RWPE1 (cell line): ENCODE measurements at regions of chr17 and their contacts with region 1.

Region 1: DNA sequence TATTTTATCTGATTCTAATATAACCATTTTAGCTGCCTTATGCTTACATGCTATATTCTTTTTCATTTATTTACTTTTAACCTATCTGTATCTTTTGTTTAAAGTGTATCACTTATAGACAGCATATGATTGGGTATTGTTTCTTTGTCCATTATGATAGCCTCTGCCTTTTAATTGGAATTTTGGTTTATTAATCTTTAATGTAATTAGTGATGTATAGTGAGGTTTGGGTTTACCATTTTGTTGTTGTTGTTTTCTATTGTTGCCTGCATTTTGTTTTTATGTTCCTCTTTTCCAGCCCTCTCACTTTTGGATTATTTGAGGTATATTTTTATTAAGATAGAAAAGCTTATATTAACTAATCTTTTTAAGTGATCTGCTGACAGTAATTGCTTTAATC is 59.4 kb downstream of the NLK start:
- DNase-seq: no peak
- H3K27ac ChIP-seq: no peak overlapping the region
- CTCF ChIP-seq: no peak

Region 2: DNA sequence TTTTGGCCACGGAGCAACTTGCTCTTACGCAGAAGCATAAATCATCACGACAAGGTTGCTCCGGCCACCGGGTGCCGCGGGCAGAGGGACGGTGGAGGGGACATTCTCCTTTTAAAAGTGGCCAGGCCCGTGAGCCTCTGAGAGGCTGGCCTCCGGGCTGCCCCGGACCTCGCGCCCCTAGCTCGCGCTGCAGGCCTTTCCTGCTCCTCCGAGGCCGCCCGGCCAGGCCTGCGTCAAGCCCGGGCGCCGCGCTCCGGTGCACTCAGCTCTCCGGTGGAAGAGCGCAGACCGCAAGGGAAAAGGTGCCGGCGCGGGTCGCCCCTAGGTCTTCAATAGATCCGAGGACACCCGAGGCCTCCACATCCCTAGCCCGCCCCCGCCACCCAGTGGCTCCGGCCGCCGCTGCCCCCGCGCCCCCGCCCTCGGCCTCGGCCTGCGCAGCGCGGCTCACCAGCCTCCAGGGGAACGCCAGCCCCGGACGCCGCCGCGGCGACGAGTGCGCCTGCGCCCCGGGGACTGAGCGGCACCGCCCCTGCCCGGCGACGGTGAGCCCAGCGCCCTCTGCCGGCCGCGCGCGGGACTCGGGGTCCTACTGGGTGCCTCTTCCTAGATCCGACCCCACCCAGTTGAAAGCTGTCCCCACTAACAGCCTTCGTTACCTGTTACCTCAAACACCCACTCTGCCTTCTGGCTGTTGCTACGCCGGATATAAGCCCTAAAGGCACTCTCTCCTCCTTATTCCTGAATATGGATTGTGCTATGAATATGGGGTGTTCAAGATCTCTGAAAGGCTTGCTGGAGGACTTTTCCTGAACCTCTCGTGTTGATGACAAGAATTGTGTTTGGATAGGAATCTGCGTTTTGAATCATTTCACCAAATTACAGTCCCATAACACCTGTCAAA is 208.8 kb before region 1 on chr17 and contains the start of gene LYRM9:
- CTCF ChIA-PET with region 1: no interaction called
- POLR2A ChIA-PET with region 1: no interaction called
- DNase-seq: peak; percentile 87
- H3K27ac ChIP-seq: peak within 1 kb of the TSS; percentile 65
- CTCF ChIP-seq: peak; percentile 97

Region 3: GRCh38 chr17:28057731-28058279 is 44.1 kb before region 1 on chr17:
- CTCF ChIA-PET with region 1: no interaction called
- POLR2A ChIA-PET with region 1: no interaction called
- DNase-seq: peak; percentile 26
- H3K27ac ChIP-seq: no peak overlapping the region
- CTCF ChIP-seq: no peak

Region 4: GRCh38 chr17:28115046-28115445 is 13.1 kb after region 1 on chr17:
- CTCF ChIA-PET with region 1: interaction called, 16 read pairs
- POLR2A ChIA-PET with region 1: no interaction called
- DNase-seq: no peak
- H3K27ac ChIP-seq: no peak overlapping the region
- CTCF ChIP-seq: no peak

Region 5: DNA sequence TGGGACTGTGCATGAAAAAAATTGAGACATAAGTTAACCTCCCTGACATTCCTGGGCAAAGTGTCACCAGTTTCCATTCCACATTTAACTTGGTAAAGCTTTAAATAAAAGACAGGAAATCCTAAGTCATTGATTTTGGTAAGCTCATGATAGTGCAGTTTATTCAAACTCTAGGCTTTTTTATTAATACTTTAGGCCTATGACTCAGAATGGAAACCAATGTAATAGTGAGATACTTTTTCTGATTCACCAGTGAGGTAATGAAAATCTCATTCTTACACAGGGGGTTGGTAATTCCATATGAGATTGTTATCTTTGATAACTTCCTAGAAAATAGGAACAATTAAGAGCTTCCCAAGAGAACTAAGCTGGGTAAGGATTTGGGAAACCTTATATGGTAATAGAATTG is 31.6 kb after region 1 on chr17:
- CTCF ChIA-PET with region 1: no interaction called
- POLR2A ChIA-PET with region 1: no interaction called
- DNase-seq: peak; percentile 30
- H3K27ac ChIP-seq: no peak overlapping the region
- CTCF ChIP-seq: no peak